Dendritic cell treated with granulocyte-macrophage colony-stimulating factor and Interleukin-4, amounts not matched to agents 40 ng/mL and 50 ng/mL, for 4 days (primary cell): ENCODE measurements at regions of chr7 and their contacts with region 1.

Region 1: DNA sequence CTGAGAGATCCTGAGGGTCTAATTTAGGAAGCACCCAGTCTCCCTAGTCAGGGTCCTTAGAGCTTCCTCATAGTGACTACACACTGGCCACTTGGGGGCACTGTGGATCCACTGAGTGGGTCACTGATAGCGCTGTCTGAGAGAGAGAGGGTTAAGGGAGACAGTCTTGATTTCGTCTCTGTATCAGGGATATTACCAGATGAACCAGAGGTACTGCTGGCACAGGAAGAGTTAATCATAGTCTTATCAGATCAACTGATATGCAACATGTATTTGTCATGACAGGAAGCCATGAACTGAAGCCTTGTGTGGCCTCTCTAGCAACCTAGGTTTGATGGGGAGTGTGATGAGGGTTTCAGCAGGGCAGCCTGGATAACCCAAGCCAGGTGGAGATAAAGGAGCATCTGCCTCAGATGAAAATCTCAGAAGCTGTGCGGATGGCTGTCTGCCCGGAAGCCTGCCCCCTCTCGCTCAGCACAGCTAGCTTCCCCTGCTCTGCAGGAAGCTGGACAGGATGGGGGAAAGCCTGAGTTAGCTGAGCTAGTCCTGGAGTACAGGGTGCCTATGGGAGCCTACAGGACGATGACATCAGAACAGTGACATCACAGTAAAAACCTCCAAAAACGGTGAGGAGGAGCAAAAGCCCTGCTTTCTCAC is 214.0 kb upstream of the PRSS1 start:
- H3K4me3 Mint-ChIP-seq: no peak overlapping the region
- H3K27ac Mint-ChIP-seq: peak overlapping the region; percentile 27
- H3K4me1 Mint-ChIP-seq: peaks cover 11% of the 10 kb centered on the region
- H3K27me3 Mint-ChIP-seq: peaks cover 3% of the 10 kb centered on the region

Region 2: GRCh38 chr7:142478479-142479072 is 56.7 kb before region 1 on chr7:
- intact Hi-C with region 1: no loop called
- H3K4me3 Mint-ChIP-seq: no peak overlapping the region
- H3K27ac Mint-ChIP-seq: no peak overlapping the region
- H3K4me1 Mint-ChIP-seq: peaks cover 60% of the 10 kb centered on the region
- H3K27me3 Mint-ChIP-seq: peaks cover 15% of the 10 kb centered on the region

Region 3: GRCh38 chr7:142587578-142588191 is 52.4 kb after region 1 on chr7:
- intact Hi-C with region 1: loop called (anchors 5 kb)
- H3K4me3 Mint-ChIP-seq: no peak overlapping the region
- H3K27ac Mint-ChIP-seq: no peak overlapping the region
- H3K4me1 Mint-ChIP-seq: peaks cover 17% of the 10 kb centered on the region
- H3K27me3 Mint-ChIP-seq: no peaks in the 10 kb centered on the region

Region 4: GRCh38 chr7:142811154-142811737 is 276.0 kb after region 1 on chr7:
- intact Hi-C with region 1: loop called (anchors 10 kb)
- H3K4me3 Mint-ChIP-seq: no peak overlapping the region
- H3K27ac Mint-ChIP-seq: no peak overlapping the region
- H3K4me1 Mint-ChIP-seq: no peaks in the 10 kb centered on the region
- H3K27me3 Mint-ChIP-seq: peaks cover 31% of the 10 kb centered on the region

Region 5: GRCh38 chr7:143229054-143229790 is 694.0 kb after region 1 on chr7:
- intact Hi-C with region 1: no loop called
- H3K4me3 Mint-ChIP-seq: no peak overlapping the region
- H3K27ac Mint-ChIP-seq: no peak overlapping the region
- H3K4me1 Mint-ChIP-seq: peaks cover 17% of the 10 kb centered on the region
- H3K27me3 Mint-ChIP-seq: no peaks in the 10 kb centered on the region